Naive thymus-derived CD8-positive, alpha-beta T cell (primary cell): ENCODE measurements at regions of chr10 and their contacts with region 1.

Region 1: GRCh38 chr10:124688889-124689670 is 55.1 kb downstream of the FAM53B start:
- DNase-seq: no peak
- ATAC-seq: peak in 1 of 2 donors; percentile 30
- H3K4me3 Mint-ChIP-seq: peak overlapping the region in 2 of 10 donors; percentile 46 to 82
- H3K27ac Mint-ChIP-seq: peak overlapping the region in 5 of 10 donors; percentile 33 to 97 (median 69)
- H3K4me1 Mint-ChIP-seq: peaks cover 30 to 87% (median 62%) of the 10 kb centered on the region in 4 donors
- H3K27me3 Mint-ChIP-seq: no peaks in the 10 kb centered on the region

Region 2: GRCh38 chr10:124671486-124672075 is 17.5 kb before region 1 on chr10:
- POLR2A ChIA-PET with region 1: interaction called, 48 read pairs
- DNase-seq: peak in 4 of 10 donors; percentile 16 to 61 (median 44)
- ATAC-seq: peak; percentile 58 to 69
- H3K4me3 Mint-ChIP-seq: peak overlapping the region; percentile 41 to 82 (median 74)
- H3K27ac Mint-ChIP-seq: peak overlapping the region; percentile 50 to 93 (median 86)
- H3K4me1 Mint-ChIP-seq: peaks cover 44 to 93% (median 75%) of the 10 kb centered on the region in 4 donors
- H3K27me3 Mint-ChIP-seq: no peaks in the 10 kb centered on the region